ENCODE measurements at regions of chr17 and their contacts with region 1.

Region 1: GRCh38 chr17:42548070-42548837 is 4.5 kb upstream of the HSD17B1 start:
- DNase-seq: peak; percentile 93
- CTCF ChIP-seq: peak; percentile 77

Region 2: DNA sequence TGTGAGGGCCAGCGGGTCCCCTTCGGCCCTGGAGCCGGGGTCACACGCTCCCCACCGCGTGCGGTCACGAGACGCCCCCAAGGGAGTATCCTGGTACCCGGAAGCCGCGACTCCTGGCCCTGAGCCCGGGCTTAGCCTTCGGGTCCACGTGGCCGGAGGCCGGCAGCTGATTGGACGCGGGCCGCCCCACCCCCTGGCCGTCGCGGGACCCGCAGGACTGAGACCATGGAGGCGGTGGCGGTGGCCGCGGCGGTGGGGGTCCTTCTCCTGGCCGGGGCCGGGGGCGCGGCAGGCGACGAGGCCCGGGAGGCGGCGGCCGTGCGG is 12.2 kb before region 1 on chr17 and contains the start of gene NAGLU:
- CTCF ChIA-PET with region 1: interaction called, 11 read pairs
- POLR2A ChIA-PET with region 1: interaction called, 4 read pairs
- DNase-seq: peak; percentile 99
- CTCF ChIP-seq: no peak

Region 3: DNA sequence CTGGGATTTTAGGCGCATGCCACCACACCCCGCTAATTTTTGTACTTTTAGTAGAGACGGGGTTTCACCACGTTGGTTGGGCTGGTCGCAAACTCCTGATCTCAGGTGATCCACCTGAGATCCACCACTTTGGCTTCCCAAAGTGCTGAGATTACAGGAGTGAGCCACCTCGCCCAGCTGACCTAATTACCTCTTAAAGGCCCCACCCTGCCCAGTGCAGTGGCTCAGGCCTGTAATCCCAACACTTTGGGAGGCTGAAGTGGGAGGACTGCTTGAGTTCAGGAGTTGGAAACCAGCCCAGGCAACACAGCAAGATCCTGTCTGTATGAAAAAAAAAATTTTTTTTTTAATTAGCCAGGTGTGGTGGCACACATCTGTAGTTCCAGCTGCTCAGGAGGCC is 10.8 kb after region 1 on chr17:
- CTCF ChIA-PET with region 1: interaction called, 11 read pairs
- POLR2A ChIA-PET with region 1: no interaction called
- DNase-seq: no peak
- CTCF ChIP-seq: no peak